ENCODE measurements at regions of chr4 and their contacts with region 1.

Region 1: DNA sequence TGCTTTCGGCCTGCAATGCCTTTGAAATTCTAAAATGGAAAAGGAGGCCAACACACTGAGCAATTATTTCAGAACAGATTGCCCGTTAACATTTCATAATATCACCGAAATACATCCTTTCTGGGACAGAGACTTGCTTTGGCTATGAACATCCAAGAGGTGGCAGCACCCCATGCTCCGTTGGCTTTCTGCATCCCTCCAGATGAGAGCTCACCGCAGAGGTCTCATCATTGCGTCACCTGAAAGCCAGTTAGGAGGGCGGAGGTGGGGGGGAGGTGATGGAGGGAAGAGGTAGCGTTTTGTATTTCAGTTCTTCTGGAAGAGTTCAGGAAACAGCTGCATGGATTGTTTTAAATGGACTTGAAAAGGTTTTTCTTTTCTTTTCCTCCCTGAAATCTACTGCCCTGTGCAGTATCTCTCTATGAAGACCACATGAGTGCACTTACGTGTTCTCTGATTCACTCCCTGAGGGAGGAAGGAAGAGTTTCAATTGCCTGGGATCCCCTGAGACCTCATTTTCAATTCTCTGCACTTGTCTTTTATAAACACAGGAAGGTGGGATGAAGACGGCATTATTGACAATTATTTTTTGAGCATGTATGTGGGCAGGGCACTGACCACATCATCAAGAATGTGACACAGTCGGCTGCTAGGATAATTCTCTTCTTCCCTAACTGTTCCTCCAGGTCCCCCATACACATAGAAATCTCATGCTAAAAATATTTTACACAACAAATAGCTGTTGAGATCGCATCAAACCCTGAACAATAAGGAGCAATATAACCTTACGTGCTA is 166.9 kb upstream of the PGRMC2 start:
- DNase-seq: peak; percentile 66 to 80
- ATAC-seq: peak; percentile 85 to 94 (median 90)
- H3K4me3 ChIP-seq: no peak overlapping the region
- H3K27ac ChIP-seq: peak overlapping the region in 2 of 10 donors; percentile 17 to 22
- H3K4me1 ChIP-seq: peaks cover 0 to 30% (median 14%) of the 10 kb centered on the region in 9 donors
- H3K27me3 ChIP-seq: no peaks in the 10 kb centered on the region
- CTCF ChIP-seq: peak; percentile 47 to 89 (median 76)

Region 2: GRCh38 chr4:128191115-128191781 is 263.2 kb before region 1 on chr4:
- intact Hi-C with region 1: loop called in 3 of 10 experiments (anchors 5 to 10 kb)
- DNase-seq: peak; percentile 21 to 55
- ATAC-seq: peak; percentile 74 to 92 (median 84)
- H3K4me3 ChIP-seq: no peak overlapping the region
- H3K27ac ChIP-seq: no peak overlapping the region
- H3K4me1 ChIP-seq: peaks cover 0 to 10% (median 0%) of the 10 kb centered on the region in 9 donors
- H3K27me3 ChIP-seq: no peaks in the 10 kb centered on the region
- CTCF ChIP-seq: peak; percentile 71 to 90 (median 86)

Region 3: GRCh38 chr4:128403586-128403985 is 50.9 kb before region 1 on chr4:
- intact Hi-C with region 1: no loop called
- DNase-seq: no peak
- ATAC-seq: no peak
- H3K4me3 ChIP-seq: no peak overlapping the region
- H3K27ac ChIP-seq: no peak overlapping the region
- H3K4me1 ChIP-seq: no peaks in the 10 kb centered on the region
- H3K27me3 ChIP-seq: no peaks in the 10 kb centered on the region
- CTCF ChIP-seq: no peak

Region 4: DNA sequence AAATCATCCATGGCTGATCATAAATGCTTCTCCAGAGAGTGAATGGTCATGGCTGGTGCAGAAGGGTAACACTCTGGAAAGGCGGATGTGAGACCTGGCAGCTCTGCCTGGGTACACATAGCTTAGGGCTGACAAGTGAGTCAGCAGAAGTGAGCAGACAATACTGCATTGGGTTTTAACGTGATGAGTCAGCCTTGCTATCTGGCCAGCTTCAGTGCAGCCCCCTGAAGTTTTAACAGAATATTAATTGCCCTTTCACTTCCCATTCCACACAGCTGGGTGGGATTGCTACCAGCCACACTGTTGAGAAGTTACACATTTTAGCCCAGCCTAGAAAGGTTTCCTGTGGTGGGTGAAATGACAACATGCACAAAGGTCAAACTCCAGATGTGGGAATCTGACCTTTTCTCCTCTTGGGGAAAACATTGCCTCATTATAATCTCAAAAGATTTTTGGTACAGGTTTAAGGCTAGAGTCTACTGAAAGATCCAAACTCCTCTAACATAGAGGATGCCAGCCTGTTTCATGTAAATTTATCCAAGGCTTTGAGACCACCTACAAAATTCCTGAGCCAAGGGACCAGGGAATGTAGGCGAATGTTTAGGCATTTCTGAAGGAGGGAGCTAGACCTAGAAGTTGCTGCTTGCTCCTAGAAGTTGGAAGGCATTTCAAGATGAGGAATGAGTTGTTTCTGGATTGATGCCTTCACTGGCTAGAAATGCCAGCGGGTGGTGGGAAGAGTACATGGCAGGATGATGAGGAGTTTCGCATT is 63.4 kb after region 1 on chr4:
- intact Hi-C with region 1: no loop called
- DNase-seq: peak; percentile 38 to 54
- ATAC-seq: peak; percentile 59 to 94 (median 84)
- H3K4me3 ChIP-seq: no peak overlapping the region
- H3K27ac ChIP-seq: peak overlapping the region in 8 of 10 donors; percentile 26 to 75 (median 57)
- H3K4me1 ChIP-seq: peaks cover 8 to 49% (median 38%) of the 10 kb centered on the region in 9 donors
- H3K27me3 ChIP-seq: no peaks in the 10 kb centered on the region
- CTCF ChIP-seq: no peak

Region 5: DNA sequence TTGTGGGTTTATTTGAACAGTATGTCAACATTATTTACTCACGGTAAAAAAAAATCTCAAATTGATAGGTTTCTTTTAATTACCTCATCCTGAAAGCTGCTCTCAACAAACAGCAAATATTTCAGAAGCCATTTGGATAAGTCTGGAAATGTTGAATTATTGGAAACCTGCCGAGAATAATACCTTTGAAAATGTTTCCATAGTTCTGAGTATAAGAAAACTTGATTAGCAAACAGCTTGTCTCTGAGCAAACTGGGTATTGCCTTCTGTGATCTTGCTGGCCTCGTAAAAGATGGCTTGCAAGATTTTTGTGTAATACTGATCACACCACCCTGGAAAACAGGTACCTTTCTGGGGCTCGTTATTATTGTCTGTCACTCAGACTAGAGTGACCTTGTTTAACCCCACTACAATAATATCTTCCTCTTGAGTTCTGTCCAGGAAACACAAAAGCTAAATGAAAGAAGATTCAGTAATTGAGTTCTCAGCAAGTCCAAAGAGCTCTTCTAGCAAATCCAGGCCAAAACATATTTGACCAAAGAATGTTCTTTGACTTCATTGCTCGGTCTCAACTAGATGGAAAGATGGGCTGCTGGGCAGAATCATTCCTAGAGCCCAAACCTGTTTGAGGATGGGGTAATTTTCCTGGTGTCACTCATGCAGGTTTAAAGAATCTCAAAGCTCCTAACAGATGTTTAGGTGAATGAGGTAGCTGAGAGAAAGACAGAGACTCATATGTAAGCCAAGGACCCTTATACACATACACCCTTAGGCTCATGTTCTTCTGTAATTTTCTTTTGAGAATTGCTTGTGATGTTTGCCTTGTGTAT is 99.4 kb after region 1 on chr4:
- intact Hi-C with region 1: loop called in 5 of 10 experiments (anchors 2 to 5 kb)
- DNase-seq: no peak
- ATAC-seq: peak in 5 of 8 donors; percentile 23 to 54 (median 31)
- H3K4me3 ChIP-seq: peak overlapping the region; percentile 12 to 74 (median 60)
- H3K27ac ChIP-seq: peak overlapping the region; percentile 73 to 97 (median 91)
- H3K4me1 ChIP-seq: peaks cover 0 to 20% (median 13%) of the 10 kb centered on the region in 9 donors
- H3K27me3 ChIP-seq: no peaks in the 10 kb centered on the region
- CTCF ChIP-seq: no peak

Region 6: GRCh38 chr4:128565565-128566186 is 111.2 kb after region 1 on chr4:
- intact Hi-C with region 1: loop called in 3 of 10 experiments (anchors 5 kb)
- DNase-seq: peak in 1 of 2 donors; percentile 39
- ATAC-seq: peak; percentile 50 to 80 (median 77)
- H3K4me3 ChIP-seq: no peak overlapping the region
- H3K27ac ChIP-seq: no peak overlapping the region
- H3K4me1 ChIP-seq: peaks cover 0 to 21% (median 4%) of the 10 kb centered on the region in 9 donors
- H3K27me3 ChIP-seq: no peaks in the 10 kb centered on the region
- CTCF ChIP-seq: peak; percentile 25 to 66 (median 61)

Region 7: DNA sequence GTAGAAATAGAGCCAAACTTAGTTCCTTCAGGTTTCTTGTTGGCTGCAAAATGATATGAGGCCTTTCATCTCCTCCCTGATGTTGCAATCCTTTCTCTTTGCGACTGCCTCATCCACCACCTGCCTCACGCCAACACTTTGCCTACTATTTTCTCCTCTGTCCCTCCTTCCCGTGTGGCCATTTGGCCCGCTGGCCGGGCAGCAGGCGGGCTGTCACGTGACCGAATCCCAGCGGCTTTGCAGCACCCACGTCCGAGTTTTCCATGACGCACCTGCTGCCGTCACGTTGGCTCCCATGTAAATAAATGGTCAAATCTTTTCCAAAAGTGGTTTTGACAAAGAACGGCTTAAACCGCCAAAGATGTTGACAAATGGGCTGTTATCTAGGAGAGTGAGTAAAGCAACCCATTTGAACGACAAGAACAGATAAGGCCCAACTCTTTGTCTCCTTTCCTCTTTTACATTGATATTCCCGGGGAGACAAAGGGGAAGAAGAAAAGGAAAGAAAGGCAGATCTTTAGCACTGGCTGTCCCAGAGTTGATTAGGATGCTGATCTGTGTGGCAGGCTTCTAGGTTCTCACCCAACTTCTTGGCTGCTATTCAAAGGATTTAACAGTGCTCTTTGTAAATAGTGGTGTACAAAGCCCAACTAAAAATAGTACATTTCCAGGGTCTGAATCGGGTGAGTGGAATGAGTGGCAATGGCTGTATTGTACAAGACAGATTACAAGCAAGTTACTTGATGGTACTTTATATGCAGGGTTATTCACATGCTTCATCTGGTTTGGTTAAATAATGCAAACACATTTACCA is 180.9 kb after region 1 on chr4:
- intact Hi-C with region 1: loop called in 1 of 10 experiments (anchors 10 kb)
- DNase-seq: peak; percentile 88 to 89
- ATAC-seq: peak; percentile 71 to 95 (median 92)
- H3K4me3 ChIP-seq: peak overlapping the region in 4 of 10 donors; percentile 9 to 24 (median 14)
- H3K27ac ChIP-seq: peak overlapping the region; percentile 47 to 86 (median 76)
- H3K4me1 ChIP-seq: peaks cover 0 to 28% (median 12%) of the 10 kb centered on the region in 9 donors
- H3K27me3 ChIP-seq: no peaks in the 10 kb centered on the region
- CTCF ChIP-seq: no peak

Region 8: GRCh38 chr4:128863312-128864075 is 409.0 kb after region 1 on chr4:
- intact Hi-C with region 1: loop called (anchors 2 to 10 kb)
- DNase-seq: peak; percentile 66 to 83
- ATAC-seq: peak; percentile 48 to 71 (median 65)
- H3K4me3 ChIP-seq: peak overlapping the region in 1 of 10 donors; percentile 0
- H3K27ac ChIP-seq: peak overlapping the region in 2 of 10 donors; percentile 26 to 46
- H3K4me1 ChIP-seq: peaks cover 3 to 54% (median 42%) of the 10 kb centered on the region in 9 donors
- H3K27me3 ChIP-seq: no peaks in the 10 kb centered on the region
- CTCF ChIP-seq: peak; percentile 82 to 94 (median 88)